ENCODE measurements at regions of chrX and their contacts with region 1.

Region 1: GRCh38 chrX:15564981-15565579 is 35.7 kb downstream of the ACE2 start:
- DNase-seq: peak in 1 of 2 donors; percentile 74
- H3K4me3 ChIP-seq: no peak overlapping the region
- H3K27ac ChIP-seq: no peak overlapping the region
- H3K4me1 ChIP-seq: no peaks in the 10 kb centered on the region
- H3K27me3 ChIP-seq: no peaks in the 10 kb centered on the region
- CTCF ChIP-seq: peak; percentile 32 to 62 (median 43)

Region 2: GRCh38 chrX:15349046-15349445 is 216.0 kb before region 1 on chrX:
- intact Hi-C with region 1: loop called (anchors 2 kb)
- DNase-seq: no peak
- H3K4me3 ChIP-seq: no peak overlapping the region
- H3K27ac ChIP-seq: no peak overlapping the region
- H3K4me1 ChIP-seq: no peaks in the 10 kb centered on the region
- H3K27me3 ChIP-seq: no peaks in the 10 kb centered on the region
- CTCF ChIP-seq: peak in 2 of 3 experiments; percentile 20 to 57

Region 3: DNA sequence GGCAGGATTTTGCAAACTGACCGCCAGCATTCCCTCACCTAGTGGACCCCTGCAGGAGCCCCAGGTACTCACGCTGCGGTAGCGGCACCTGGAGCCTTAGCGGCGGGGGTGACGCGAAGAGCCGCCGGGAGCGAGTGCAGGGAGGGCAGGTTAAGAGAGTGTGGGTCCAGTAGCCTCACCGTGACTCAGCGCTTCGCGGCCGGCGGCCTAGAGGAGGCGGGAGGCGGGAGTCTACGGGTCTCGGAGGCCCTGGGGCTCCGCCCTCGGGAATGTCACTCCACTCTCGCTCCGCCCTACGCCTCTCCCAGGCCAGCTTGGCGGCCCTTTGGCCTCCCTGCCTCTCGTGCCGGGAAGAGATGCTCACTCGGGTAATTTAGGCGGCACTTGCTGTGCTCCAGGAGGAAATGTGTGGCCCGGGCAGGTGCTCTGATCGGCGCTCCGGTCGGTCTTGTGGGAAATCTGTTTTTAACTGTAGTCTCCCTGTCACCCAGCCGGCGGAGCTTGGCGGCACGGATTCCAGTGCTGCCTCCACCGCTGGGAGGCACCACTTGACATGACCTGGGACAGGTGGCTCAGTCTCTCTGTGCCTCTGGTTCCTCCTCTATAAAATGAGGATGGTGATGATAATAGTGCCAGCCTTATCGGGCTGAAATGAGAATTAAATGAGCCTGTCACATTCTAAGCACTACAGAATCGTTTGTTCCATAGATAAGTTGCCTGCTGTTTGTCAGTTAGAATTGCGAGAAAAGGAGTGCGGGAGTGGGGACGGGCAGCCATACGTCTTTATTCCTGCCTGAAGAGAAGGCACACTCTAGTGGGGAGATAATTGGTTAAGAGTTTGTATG is 71.7 kb before region 1 on chrX and contains the start of gene PIR:
- intact Hi-C with region 1: loop called (anchors 2 kb)
- DNase-seq: peak; percentile 57 to 93
- H3K4me3 ChIP-seq: peak within 1 kb of the TSS; percentile 49 to 70
- H3K27ac ChIP-seq: peak within 1 kb of the TSS; percentile 44 to 56
- H3K4me1 ChIP-seq: no peaks in the 10 kb centered on the region
- H3K27me3 ChIP-seq: no peaks in the 10 kb centered on the region
- CTCF ChIP-seq: peak in 2 of 3 experiments; percentile 36 to 56
- total RNA-seq, gene PIR: 14.6 TPM

Region 4: DNA sequence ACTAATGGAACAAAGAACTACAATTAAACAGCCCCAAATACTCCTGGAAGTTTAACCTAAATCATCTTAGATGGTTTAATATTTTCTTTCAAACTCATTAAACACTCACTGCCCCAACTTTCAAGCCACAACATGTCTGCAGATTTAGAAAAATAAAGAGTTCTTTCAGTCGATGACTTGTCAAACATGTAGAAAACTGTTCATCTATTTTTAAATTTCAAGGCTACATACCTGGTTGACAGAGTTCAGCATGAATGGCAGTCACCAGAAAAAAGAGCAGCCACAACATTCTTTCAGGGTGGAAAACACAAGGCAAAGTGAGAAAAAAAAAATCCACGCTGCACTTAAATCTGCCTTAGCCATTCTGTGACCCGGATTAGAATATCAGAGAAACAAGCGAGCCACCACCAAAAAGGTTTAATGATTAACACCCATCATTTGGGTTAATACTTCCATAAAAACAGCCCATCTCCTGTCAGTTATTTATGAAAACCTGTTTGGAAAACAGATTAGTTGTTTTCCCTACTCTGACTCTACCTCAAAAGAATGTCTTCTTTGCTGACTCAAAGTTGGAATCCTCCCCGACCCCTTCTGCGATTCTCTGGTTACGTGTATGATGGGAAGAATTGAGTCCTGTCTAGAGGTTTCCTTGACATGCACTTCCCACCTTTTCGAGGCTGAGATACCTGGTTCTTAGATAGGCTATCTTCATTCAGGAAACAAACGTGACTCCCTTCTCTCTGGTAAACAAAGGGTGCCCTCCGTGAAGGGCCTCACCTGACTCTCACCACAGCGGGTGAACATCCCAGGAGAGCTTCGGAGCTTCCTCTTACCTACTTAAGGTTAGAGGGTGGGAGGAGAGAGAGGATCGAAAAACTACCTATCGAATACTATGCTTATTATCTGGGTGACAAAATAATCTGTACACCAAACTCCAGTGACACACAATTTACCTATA is 99.7 kb after region 1 on chrX and contains the start of gene CLTRN:
- intact Hi-C with region 1: no loop called
- DNase-seq: no peak
- H3K4me3 ChIP-seq: no peak within 1 kb of the TSS
- H3K27ac ChIP-seq: no peak within 1 kb of the TSS
- H3K4me1 ChIP-seq: no peaks in the 10 kb centered on the region
- H3K27me3 ChIP-seq: no peaks in the 10 kb centered on the region
- CTCF ChIP-seq: no peak
- total RNA-seq, gene CLTRN: not detected

Region 5: GRCh38 chrX:15714529-15714928 is 149.4 kb after region 1 on chrX:
- intact Hi-C with region 1: no loop called
- DNase-seq: no peak
- H3K4me3 ChIP-seq: no peak overlapping the region
- H3K27ac ChIP-seq: no peak overlapping the region
- H3K4me1 ChIP-seq: no peaks in the 10 kb centered on the region
- H3K27me3 ChIP-seq: no peaks in the 10 kb centered on the region
- CTCF ChIP-seq: no peak